Right cardiac atrium (tissue), 5 donors: ENCODE measurements at regions of chr5 and their contacts with region 1.

Region 1: DNA sequence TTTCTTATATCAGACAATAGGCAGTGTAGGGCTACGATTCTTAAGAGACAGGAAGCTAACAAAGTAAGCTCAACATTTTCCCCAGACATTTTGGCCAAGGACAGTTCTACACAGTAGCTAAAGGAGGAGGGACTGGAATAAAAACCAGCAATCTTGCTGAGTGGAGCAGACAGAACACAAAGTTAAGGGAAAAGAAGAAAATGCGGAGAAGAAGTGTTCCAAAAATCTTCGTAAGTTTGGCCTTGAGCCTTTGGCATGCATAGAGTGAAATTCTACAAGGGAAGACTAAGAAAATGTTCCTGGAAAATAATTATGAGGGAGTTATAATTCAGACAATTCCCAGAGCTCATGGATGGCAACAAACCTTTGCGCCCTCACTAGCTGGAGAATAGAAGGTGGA is 748.0 kb upstream of the CTNND2 start:
- DNase-seq: no peak
- ATAC-seq: no peak
- H3K4me3 ChIP-seq: no peak overlapping the region
- H3K27ac ChIP-seq: no peak overlapping the region
- H3K4me1 ChIP-seq: no peaks in the 10 kb centered on the region
- H3K27me3 ChIP-seq: no peaks in the 10 kb centered on the region

Region 2: GRCh38 chr5:12323637-12324229 is 328.5 kb before region 1 on chr5:
- intact Hi-C with region 1: no loop called
- DNase-seq: no peak
- ATAC-seq: no peak
- H3K4me3 ChIP-seq: no peak overlapping the region
- H3K27ac ChIP-seq: no peak overlapping the region
- H3K4me1 ChIP-seq: no peaks in the 10 kb centered on the region
- H3K27me3 ChIP-seq: no peaks in the 10 kb centered on the region

Region 3: DNA sequence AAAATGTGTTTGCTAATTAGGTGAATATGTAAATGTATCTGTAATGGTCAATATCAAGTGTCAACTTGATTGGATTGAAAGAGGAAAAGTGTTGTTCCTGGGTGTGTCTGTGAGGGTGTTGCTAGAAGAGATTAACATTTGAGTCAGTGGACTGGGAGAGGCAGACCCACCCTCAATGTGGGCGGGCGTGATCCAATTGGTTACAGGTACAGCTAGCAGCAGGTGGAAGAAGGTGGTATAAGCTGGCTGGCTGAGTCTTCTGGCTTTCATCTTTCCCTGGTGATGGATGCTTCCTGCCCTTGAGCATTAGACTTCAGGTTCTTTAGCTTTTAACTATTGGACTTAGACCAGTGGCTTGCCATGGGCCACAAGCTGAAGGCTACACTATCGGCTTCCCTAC is 31.0 kb after region 1 on chr5:
- intact Hi-C with region 1: loop called in 1 of 4 experiments (anchors 2 kb)
- DNase-seq: no peak
- ATAC-seq: no peak
- H3K4me3 ChIP-seq: no peak overlapping the region
- H3K27ac ChIP-seq: no peak overlapping the region
- H3K4me1 ChIP-seq: no peaks in the 10 kb centered on the region
- H3K27me3 ChIP-seq: no peaks in the 10 kb centered on the region